ENCODE measurements at regions of chr17 and their contacts with region 1.

Region 1: DNA sequence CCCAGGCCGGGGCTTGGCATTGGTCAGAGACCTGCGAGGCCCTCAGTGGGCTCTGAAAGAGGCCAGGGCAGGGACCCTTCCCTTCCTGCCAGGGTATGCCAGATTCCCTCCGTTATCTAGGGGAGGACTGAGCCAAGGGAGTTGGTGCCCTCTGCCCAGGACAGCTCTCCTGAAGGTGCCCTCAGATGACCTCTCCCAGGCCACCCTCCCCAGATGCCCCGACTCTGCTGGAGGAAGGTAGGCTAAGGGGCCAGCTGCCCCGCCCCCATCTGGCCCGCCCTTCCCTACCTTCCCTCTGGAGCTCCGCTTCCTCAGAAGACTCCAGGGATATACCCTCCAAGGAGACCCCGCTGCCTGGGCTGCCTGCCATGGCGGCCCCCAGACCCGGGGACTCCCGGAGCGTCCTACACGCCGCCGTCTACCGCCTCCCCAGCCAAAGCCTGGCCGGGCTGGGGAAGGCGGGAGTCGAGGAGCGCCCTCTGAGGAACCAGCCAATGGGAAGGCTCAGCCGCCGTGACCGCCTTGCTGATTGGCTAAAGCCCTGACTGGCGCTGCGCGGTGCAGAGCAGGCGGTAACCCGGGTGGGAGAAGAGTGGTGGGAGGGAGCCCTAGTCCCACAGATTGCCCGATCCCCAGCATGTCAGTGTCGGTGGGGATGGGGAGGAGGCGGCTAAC is 7.0 kb downstream of the MPP2 start:
- DNase-seq: peak; percentile 56
- ATAC-seq: peak; percentile 100
- H3K4me3 ChIP-seq: peak overlapping the region; percentile 57 to 70
- H3K27ac ChIP-seq: peak overlapping the region; percentile 24; the same call in 1 of the 2 replicates
- H3K4me1 ChIP-seq: peaks cover 21 to 42% of the 10 kb centered on the region in 2 experiments; a peak in 3 of 4 replicates
- H3K27me3 ChIP-seq: no peaks in the 10 kb centered on the region
- CTCF ChIP-seq: no peak
- POLR2A ChIP-seq: no peak
- RAD21 ChIP-seq: no peak

Region 2: GRCh38 chr17:43888548-43888947 is 11.8 kb before region 1 on chr17:
- CTCF ChIA-PET with region 1: no interaction called
- POLR2A ChIA-PET with region 1: no interaction called
- RAD21 ChIA-PET with region 1: no interaction called
- intact Hi-C with region 1: no loop called
- DNase-seq: no peak
- ATAC-seq: no peak
- H3K4me3 ChIP-seq: no peak overlapping the region
- H3K27ac ChIP-seq: no peak overlapping the region
- H3K4me1 ChIP-seq: no peaks in the 10 kb centered on the region
- H3K27me3 ChIP-seq: no peaks in the 10 kb centered on the region
- CTCF ChIP-seq: no peak
- POLR2A ChIP-seq: no peak
- RAD21 ChIP-seq: no peak

Region 3: DNA sequence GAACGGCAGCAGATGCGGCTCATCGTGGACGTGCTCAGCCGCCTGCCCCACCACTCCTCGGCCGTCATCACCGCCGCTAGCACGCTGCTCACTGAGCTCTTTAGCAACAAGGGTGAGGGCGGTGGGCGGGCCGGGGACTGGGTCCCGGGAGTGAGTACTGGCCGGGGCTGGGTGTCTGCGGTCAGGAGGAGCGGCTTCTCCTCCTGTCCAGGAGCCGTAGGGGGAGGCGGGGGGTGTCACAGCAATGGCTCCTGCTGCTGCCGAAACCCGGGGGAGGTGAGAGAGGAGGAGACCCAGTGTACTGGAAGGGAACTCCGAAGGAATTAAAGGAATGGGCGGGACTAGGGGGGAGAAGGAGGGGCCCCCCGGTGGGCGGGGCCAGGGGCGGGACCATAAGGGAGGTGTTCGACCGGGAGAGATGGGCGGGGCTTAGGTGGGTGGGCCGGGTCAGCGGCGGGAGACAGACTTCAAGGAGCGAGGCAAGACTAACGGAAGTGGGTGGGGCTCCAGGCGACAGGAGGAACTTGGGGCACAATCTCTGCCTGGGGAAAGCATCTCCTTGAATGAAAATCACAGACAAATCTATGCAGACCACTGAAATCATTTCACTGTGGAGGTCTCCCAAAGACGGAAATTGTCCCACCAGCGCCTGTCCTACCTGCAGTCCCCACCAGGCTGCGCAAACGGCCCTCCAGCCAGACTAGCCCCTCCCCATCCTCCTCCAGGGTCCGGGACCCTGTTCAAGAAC is 106.5 kb after region 1 on chr17:
- CTCF ChIA-PET with region 1: no interaction called
- POLR2A ChIA-PET with region 1: no interaction called
- RAD21 ChIA-PET with region 1: no interaction called
- intact Hi-C with region 1: no loop called
- DNase-seq: peak; percentile 95
- ATAC-seq: peak; percentile 67
- H3K4me3 ChIP-seq: peak overlapping the region; percentile 87 to 92
- H3K27ac ChIP-seq: peak overlapping the region; percentile 83
- H3K4me1 ChIP-seq: peaks cover 36 to 82% of the 10 kb centered on the region in 2 experiments
- H3K27me3 ChIP-seq: no peaks in the 10 kb centered on the region
- CTCF ChIP-seq: peak in 2 of 3 experiments; percentile 59 to 65; a peak in 4 of 6 replicates
- POLR2A ChIP-seq: peak; percentile 70
- RAD21 ChIP-seq: no peak

Region 4: GRCh38 chr17:44363613-44364159 is 463.4 kb after region 1 on chr17 and contains the start of gene FAM171A2:
- CTCF ChIA-PET with region 1: no interaction called
- POLR2A ChIA-PET with region 1: no interaction called
- RAD21 ChIA-PET with region 1: no interaction called
- intact Hi-C with region 1: loop called (anchors 10 kb)
- DNase-seq: no peak
- ATAC-seq: peak; percentile 87
- H3K4me3 ChIP-seq: peak within 1 kb of the TSS; percentile 60 to 75
- H3K27ac ChIP-seq: peak within 1 kb of the TSS; percentile 72; the same call in 1 of the 2 replicates
- H3K4me1 ChIP-seq: peaks cover 7 to 27% of the 10 kb centered on the region in 2 experiments; a peak in 3 of 4 replicates
- H3K27me3 ChIP-seq: no peaks in the 10 kb centered on the region
- CTCF ChIP-seq: peak; percentile 26 to 56 (median 42); a peak in 5 of 6 replicates
- POLR2A ChIP-seq: no peak
- RAD21 ChIP-seq: no peak
- total RNA-seq, gene FAM171A2: 18.0 TPM

Measured in HCT116 (cell line).